ENCODE measurements at regions of chr7 and their contacts with region 1.

Region 1: DNA sequence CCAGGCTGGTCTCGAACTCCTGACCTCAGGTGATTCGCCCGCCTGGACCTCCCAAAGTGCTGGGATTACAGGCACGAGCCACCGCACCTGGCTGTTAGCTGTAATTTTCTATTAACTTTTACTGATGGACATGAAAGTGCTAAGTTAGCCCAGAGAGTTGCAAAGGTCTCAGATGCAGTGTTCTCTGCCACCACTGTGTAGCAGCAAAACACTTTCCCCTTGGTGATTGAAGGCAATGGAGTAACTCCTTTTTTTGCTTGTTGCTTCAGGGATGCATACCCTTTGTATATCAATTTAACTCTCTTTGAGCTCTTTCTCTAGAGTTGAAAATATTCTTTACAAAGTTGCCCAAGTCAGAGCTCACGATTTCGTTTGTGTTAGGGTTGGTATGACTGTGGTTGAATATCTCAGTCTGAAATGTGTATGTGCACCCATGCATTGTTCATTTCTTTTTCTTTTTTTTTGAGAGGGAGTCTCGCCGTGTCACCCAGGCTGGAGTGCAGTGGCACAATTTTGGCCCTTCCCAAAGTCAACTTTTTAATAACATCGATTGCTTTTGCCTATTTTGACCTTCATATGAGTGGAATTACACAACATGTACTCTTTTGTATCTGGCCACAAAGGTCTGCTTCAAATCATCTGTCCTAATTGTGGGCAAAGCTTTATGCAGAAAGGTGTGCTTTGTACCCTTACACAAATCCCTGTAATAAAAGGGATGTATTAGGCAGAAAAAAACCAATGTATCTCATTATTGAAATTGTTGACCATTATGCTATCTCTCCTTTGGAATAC is 52.6 kb downstream of the GTF2I start:
- DNase-seq: no peak
- ATAC-seq: no peak
- H3K4me3 ChIP-seq: no peak overlapping the region
- H3K27ac ChIP-seq: no peak overlapping the region
- H3K4me1 ChIP-seq: no peaks in the 10 kb centered on the region
- H3K27me3 ChIP-seq: no peaks in the 10 kb centered on the region
- CTCF ChIP-seq: no peak
- POLR2A ChIP-seq: no peak

Region 2: DNA sequence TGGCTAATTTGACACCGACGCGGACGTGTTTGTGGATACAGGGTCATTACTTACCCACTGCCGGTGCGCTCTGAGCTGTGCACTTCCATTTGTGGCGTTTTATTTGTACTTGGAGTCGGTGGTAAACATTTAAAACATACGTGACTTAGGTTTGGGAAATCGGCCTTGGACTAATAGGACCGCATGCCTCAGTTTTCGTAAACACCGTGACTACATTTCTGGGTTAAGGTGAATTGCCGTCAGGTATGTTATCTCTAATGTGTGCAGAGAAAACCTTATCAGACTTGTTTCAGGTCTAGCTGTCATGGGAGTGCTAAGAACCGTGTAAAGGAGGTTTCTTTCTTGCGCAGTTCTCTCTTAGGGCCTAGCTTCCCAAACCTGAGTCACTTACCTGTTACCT is 12.1 kb after region 1 on chr7:
- in situ Hi-C with region 1: no loop called
- intact Hi-C with region 1: loop called (anchors 1 kb)
- DNase-seq: no peak
- ATAC-seq: no peak
- H3K4me3 ChIP-seq: no peak overlapping the region
- H3K27ac ChIP-seq: no peak overlapping the region
- H3K4me1 ChIP-seq: peaks cover 13% of the 10 kb centered on the region in 2 donors
- H3K27me3 ChIP-seq: no peaks in the 10 kb centered on the region
- CTCF ChIP-seq: no peak
- POLR2A ChIP-seq: no peak

Measured in gastrocnemius medialis (tissue), 4 donors.